Caco-2 (cell line): ENCODE measurements at regions of chr22 and their contacts with region 1.

Region 1: GRCh38 chr22:25726241-25726640 is 15.7 kb upstream of the MYO18B start:
- DNase-seq: peak in 1 of 2 experiments; percentile 26
- H3K4me3 ChIP-seq: no peak overlapping the region
- H3K4me3 Mint-ChIP-seq: peak overlapping the region; percentile 27
- H3K27ac Mint-ChIP-seq: peak overlapping the region; percentile 91
- H3K4me1 ChIP-seq: peaks cover 17% of the 10 kb centered on the region
- H3K4me1 Mint-ChIP-seq: peaks cover 7% of the 10 kb centered on the region
- H3K27me3 ChIP-seq: no peaks in the 10 kb centered on the region
- H3K27me3 Mint-ChIP-seq: no peaks in the 10 kb centered on the region
- CTCF ChIP-seq: no peak

Region 2: GRCh38 chr22:25701056-25701780 is 25.0 kb before region 1 on chr22:
- CTCF ChIA-PET with region 1: no interaction called
- POLR2A ChIA-PET with region 1: no interaction called
- intact Hi-C with region 1: no loop called
- DNase-seq: no peak
- H3K4me3 ChIP-seq: no peak overlapping the region
- H3K4me3 Mint-ChIP-seq: no peak overlapping the region
- H3K27ac Mint-ChIP-seq: no peak overlapping the region
- H3K4me1 ChIP-seq: no peaks in the 10 kb centered on the region
- H3K4me1 Mint-ChIP-seq: no peaks in the 10 kb centered on the region
- H3K27me3 ChIP-seq: no peaks in the 10 kb centered on the region
- H3K27me3 Mint-ChIP-seq: no peaks in the 10 kb centered on the region
- CTCF ChIP-seq: no peak

Region 3: DNA sequence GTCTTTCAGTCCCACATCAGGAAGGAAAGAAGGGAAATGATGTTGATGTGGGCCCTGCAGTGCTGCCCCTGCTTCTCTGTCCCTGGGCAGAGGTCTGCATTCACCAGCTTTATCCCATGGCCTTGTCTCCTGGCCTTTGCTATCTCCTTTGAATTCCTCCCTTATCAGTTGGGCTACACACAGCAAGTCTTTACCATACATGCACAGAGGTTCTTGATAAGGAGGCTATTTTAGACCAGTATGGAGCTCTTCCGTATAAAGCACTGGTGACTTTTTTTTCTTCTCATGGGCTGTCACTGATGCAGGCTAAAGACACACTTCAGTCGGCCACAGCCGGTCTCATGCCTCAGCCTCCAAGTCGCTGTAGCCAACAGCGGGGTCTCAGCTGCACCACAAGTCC is 35.9 kb after region 1 on chr22:
- CTCF ChIA-PET with region 1: no interaction called
- POLR2A ChIA-PET with region 1: no interaction called
- intact Hi-C with region 1: loop called (anchors 1 kb)
- DNase-seq: peak; percentile 58 to 65
- H3K4me3 ChIP-seq: no peak overlapping the region
- H3K4me3 Mint-ChIP-seq: peak overlapping the region; percentile 32
- H3K27ac Mint-ChIP-seq: peak overlapping the region; percentile 65
- H3K4me1 ChIP-seq: peaks cover 32% of the 10 kb centered on the region
- H3K4me1 Mint-ChIP-seq: peaks cover 9% of the 10 kb centered on the region
- H3K27me3 ChIP-seq: no peaks in the 10 kb centered on the region
- H3K27me3 Mint-ChIP-seq: no peaks in the 10 kb centered on the region
- CTCF ChIP-seq: no peak